Aorta (tissue), 5 donors: ENCODE measurements at regions of chr5 and their contacts with region 1.

Region 1: GRCh38 chr5:137220523-137220927 is 278.6 kb downstream of the SPOCK1 start:
- DNase-seq: no peak
- ATAC-seq: no peak
- H3K4me3 ChIP-seq: no peak overlapping the region
- H3K27ac ChIP-seq: no peak overlapping the region
- H3K4me1 ChIP-seq: peaks cover 0 to 2% of the 10 kb centered on the region in 2 donors
- H3K27me3 ChIP-seq: no peaks in the 10 kb centered on the region

Region 2: DNA sequence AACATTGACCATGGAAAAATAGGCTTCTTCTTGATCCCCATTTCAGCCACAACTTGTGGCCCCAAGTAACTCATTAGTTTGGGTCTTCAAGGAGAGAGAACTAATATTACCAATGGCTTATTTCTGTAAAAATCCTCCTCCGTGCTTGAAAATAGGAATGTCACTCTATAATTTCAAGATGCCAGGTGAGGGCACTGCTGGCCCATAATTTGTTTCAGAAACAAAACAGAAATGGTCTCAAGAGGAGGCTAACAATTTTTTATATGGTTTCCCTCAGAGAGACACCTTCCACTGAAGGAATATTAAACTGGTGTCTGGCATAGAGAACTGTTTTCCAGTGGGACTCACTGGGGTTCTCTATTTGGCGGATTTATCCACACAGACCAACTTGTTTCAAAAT is 418.1 kb before region 1 on chr5:
- intact Hi-C with region 1: loop called (anchors 10 kb)
- DNase-seq: no peak
- ATAC-seq: no peak
- H3K4me3 ChIP-seq: no peak overlapping the region
- H3K27ac ChIP-seq: no peak overlapping the region
- H3K4me1 ChIP-seq: no peaks in the 10 kb centered on the region
- H3K27me3 ChIP-seq: no peaks in the 10 kb centered on the region

Region 3: DNA sequence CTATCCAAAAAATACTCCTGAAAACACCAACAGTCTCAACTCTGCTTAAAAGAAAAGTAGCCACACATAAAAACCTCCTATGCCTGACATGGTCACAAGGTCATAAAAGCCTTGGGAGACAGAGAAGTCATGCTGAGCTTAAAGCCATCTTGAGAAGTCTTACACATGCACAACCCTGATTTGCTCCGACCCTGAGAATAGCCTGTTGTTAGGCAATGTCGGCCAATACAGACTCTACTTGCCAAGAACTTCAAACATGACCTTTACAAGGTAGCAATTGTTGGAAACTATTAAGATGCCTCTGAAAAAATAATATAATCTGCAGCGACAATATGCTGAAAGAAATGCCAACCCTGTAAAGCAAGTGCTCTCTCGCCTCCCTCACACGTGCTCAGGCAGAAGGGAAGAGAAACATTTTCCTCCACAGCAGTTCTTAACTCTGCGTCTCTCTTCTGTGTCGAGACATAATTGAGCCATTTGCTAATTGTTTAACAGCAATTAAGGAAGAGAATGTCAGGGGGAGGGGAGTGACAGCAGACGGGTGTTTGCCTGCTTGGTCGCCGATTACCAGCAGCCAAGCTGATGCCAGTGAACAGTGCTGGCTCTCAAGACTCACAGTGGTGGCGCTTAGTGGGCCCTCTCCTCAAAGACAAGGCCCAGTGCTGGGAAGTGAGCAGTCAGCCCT is 115.0 kb before region 1 on chr5:
- intact Hi-C with region 1: no loop called
- DNase-seq: no peak
- ATAC-seq: no peak
- H3K4me3 ChIP-seq: no peak overlapping the region
- H3K27ac ChIP-seq: no peak overlapping the region
- H3K4me1 ChIP-seq: no peaks in the 10 kb centered on the region
- H3K27me3 ChIP-seq: no peaks in the 10 kb centered on the region